Natural killer cell (primary cell): ENCODE measurements at regions of chr5 and their contacts with region 1.

Region 1: DNA sequence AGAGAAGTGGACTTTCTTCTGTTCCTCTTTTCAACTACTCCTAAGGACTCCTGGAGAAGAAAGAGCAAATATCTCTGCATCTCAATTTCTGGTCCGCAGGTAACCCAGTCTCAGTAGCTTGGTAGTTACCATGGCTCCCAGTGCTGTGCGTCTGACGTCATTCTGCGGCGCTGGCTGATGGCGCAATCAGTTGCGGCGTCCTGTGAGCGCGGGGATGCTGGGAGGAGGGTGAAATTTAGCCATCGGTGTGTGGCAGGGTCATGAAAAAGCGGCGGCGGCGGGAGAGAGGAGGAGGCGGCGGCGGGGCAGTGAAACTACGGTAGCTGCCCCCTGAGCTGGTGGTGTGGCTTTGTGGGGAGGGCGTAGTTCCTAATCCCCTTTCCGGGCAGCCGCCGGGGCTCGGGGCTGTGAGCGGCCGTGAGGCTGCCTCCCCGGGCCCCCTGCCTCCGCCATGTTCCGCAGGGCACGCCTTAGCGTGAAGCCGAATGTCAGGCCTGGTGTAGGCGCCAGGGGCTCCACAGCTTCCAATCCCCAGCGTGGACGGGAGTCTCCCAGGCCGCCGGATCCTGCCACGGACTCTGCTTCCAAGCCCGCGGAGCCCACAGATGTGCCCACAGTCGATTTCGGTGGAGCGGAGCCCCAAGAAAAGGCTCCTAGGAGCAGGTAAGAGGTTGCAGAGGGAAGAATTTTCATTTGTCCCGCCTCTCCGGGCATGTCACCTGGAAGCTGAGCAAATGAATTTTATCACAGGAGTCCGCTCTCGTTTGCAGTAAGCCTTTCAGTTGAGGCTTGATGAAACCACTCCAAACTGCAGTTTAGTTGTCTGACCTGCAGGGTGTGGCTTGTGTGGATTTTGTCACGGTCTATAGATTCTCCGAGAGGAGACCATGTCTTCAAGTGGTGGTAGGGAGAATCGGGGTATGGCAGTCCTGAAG is at the start of gene BDP1:
- DNase-seq: peak; percentile 98 to 99
- ATAC-seq: peak; percentile 85 to 91 (median 88)
- H3K4me3 ChIP-seq: peak within 1 kb of the TSS; percentile 75
- H3K4me3 Mint-ChIP-seq: peak within 1 kb of the TSS; percentile 99
- H3K27ac ChIP-seq: peak within 1 kb of the TSS; percentile 83
- H3K27ac Mint-ChIP-seq: peak within 1 kb of the TSS; percentile 97 to 99
- H3K4me1 ChIP-seq: peaks cover 10% of the 10 kb centered on the region
- H3K4me1 Mint-ChIP-seq: peaks cover 22 to 26% of the 10 kb centered on the region in 2 donors
- H3K27me3 ChIP-seq: no peaks in the 10 kb centered on the region
- H3K27me3 Mint-ChIP-seq: peaks cover 1 to 10% of the 10 kb centered on the region in 2 donors
- CTCF ChIP-seq: peak; percentile 57
- total RNA-seq, gene BDP1: 45.1 to 46.2 (median 45.8) TPM

Region 2: GRCh38 chr5:71528206-71528605 is 72.5 kb after region 1 on chr5:
- intact Hi-C with region 1: no loop called
- DNase-seq: no peak
- ATAC-seq: no peak
- H3K4me3 ChIP-seq: no peak overlapping the region
- H3K4me3 Mint-ChIP-seq: no peak overlapping the region
- H3K27ac ChIP-seq: no peak overlapping the region
- H3K27ac Mint-ChIP-seq: peak overlapping the region in 1 of 2 donors; percentile 36
- H3K4me1 ChIP-seq: no peaks in the 10 kb centered on the region
- H3K4me1 Mint-ChIP-seq: peaks cover 0 to 3% of the 10 kb centered on the region in 2 donors
- H3K27me3 ChIP-seq: no peaks in the 10 kb centered on the region
- H3K27me3 Mint-ChIP-seq: no peaks in the 10 kb centered on the region
- CTCF ChIP-seq: no peak

Region 3: GRCh38 chr5:71586941-71587765 is 131.5 kb after region 1 on chr5 and contains the start of gene MCCC2:
- intact Hi-C with region 1: loop called (anchors 1 kb)
- DNase-seq: peak; percentile 97 to 98
- ATAC-seq: peak; percentile 95 to 99 (median 95)
- H3K4me3 ChIP-seq: peak within 1 kb of the TSS; percentile 71
- H3K4me3 Mint-ChIP-seq: peak within 1 kb of the TSS; percentile 94
- H3K27ac ChIP-seq: peak within 1 kb of the TSS; percentile 90
- H3K27ac Mint-ChIP-seq: peak within 1 kb of the TSS; percentile 94 to 97
- H3K4me1 ChIP-seq: peaks cover 17% of the 10 kb centered on the region
- H3K4me1 Mint-ChIP-seq: peaks cover 33 to 46% of the 10 kb centered on the region in 2 donors
- H3K27me3 ChIP-seq: no peaks in the 10 kb centered on the region
- H3K27me3 Mint-ChIP-seq: no peaks in the 10 kb centered on the region
- CTCF ChIP-seq: no peak
- total RNA-seq, gene MCCC2: 23.3 to 35.2 (median 32.5) TPM

Region 4: GRCh38 chr5:71732011-71732410 is 276.3 kb after region 1 on chr5:
- intact Hi-C with region 1: no loop called
- DNase-seq: no peak
- ATAC-seq: no peak
- H3K4me3 ChIP-seq: no peak overlapping the region
- H3K4me3 Mint-ChIP-seq: no peak overlapping the region
- H3K27ac ChIP-seq: no peak overlapping the region
- H3K27ac Mint-ChIP-seq: no peak overlapping the region
- H3K4me1 ChIP-seq: no peaks in the 10 kb centered on the region
- H3K4me1 Mint-ChIP-seq: no peaks in the 10 kb centered on the region
- H3K27me3 ChIP-seq: no peaks in the 10 kb centered on the region
- H3K27me3 Mint-ChIP-seq: peaks cover 9 to 21% of the 10 kb centered on the region in 2 donors
- CTCF ChIP-seq: no peak